ENCODE measurements at regions of chr19 and their contacts with region 1.

Region 1: DNA sequence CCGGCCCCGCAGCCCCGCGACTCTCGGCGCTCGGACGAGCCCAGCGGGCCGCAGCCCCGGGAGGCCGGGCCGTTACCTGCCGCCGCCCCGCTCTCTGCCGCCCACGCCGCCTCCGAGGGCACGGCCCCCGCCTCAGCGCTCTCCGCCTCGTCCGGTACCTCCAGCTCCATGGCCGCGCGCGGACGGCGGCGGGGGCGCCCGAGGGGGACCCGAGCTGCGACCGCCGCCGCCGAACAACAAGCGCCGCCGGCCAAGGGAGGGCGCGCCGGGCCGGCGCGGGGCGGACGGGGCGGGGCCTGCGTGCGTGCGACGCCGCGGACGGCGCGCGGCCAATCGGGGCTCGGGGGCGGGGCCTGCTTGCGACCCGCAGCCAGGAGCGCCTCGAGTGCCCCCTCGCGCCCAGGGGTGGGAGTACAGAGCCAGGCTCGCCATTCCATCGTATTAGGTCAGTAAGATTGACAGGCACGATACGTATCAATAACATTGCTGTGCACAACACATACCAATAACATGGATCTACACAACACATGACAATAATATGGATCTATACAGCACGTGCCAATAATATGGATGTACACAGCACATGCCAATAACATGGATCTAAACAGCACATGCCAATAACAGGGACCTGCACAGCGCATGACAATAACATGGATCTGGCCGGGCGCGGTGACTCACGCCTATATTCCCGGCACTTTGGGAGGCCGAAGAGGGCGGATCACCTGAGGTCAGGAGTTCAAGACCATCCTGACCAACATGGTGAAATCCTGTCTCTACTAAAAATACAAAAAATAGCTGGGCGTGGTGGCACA is at the start of gene PIP5K1C:
- DNase-seq: peak; percentile 53 to 94
- H3K4me3 ChIP-seq: peak within 1 kb of the TSS; percentile 93 to 99
- H3K27ac ChIP-seq: peak within 1 kb of the TSS; percentile 80 to 82
- H3K4me1 ChIP-seq: peaks cover 0 to 20% of the 10 kb centered on the region in 2 donors
- H3K27me3 ChIP-seq: no peaks in the 10 kb centered on the region
- CTCF ChIP-seq: peak; percentile 77 to 95 (median 77)
- total RNA-seq, gene PIP5K1C: 87.3 TPM

Region 2: GRCh38 chr19:3544742-3545668 is 155.4 kb before region 1 on chr19:
- intact Hi-C with region 1: loop called (anchors 5 kb)
- DNase-seq: peak in 1 of 2 donors; percentile 82
- H3K4me3 ChIP-seq: no peak overlapping the region
- H3K27ac ChIP-seq: no peak overlapping the region
- H3K4me1 ChIP-seq: peaks cover 3 to 8% of the 10 kb centered on the region in 2 donors
- H3K27me3 ChIP-seq: no peaks in the 10 kb centered on the region
- CTCF ChIP-seq: peak; percentile 93 to 96 (median 93)

Region 3: GRCh38 chr19:3626473-3627350 is 73.7 kb before region 1 on chr19 and contains the start of gene CACTIN:
- intact Hi-C with region 1: loop called (anchors 2 kb)
- DNase-seq: peak; percentile 94 to 99
- H3K4me3 ChIP-seq: peak within 1 kb of the TSS; percentile 74 to 94
- H3K27ac ChIP-seq: peak within 1 kb of the TSS; percentile 91 to 93
- H3K4me1 ChIP-seq: peaks cover 10 to 15% of the 10 kb centered on the region in 2 donors
- H3K27me3 ChIP-seq: no peaks in the 10 kb centered on the region
- CTCF ChIP-seq: no peak
- total RNA-seq, gene CACTIN: 57.6 TPM

Region 4: DNA sequence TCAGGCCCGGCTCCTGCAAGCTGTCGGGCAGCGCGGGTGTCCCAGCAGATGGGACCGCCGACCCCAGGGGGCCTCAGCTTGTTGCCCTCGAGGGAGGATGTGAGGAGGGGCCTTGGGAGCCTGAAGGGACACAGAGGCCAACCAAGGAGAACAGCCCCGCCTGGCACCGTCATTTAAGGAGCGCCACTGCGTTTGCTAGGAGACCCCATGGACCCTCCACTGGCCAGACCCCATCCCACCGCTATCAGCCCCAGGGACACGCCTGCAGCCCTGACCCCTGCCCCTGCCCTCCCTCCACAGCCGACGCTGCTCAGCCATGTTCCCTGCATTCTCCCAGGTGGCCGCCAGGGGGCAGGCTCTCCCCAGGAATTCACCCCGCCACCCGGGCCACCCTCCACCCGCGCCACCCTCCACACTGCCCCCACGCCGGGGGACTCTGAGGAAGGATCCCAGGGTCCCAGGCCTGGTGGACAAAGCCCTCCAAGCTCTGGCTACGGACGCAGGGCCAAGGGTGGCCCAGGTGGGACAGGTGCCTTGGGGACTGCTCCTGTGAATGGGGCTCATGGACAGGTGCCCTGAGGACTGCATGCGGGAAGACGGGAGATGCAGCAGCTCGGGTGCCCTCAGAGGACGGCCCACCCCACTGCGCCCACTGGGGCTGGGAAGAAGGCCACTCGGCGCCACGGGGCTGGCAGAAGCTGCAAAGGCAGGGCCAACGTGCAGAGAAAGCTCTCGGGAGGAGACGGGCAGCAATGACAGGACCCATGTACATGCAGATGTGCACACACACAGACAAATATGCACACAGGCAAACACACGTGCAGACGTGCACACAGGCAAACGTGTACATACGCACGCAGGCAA is 34.5 kb before region 1 on chr19:
- intact Hi-C with region 1: loop called (anchors 1 kb)
- DNase-seq: no peak
- H3K4me3 ChIP-seq: no peak overlapping the region
- H3K27ac ChIP-seq: no peak overlapping the region
- H3K4me1 ChIP-seq: peaks cover 9 to 39% of the 10 kb centered on the region in 2 donors
- H3K27me3 ChIP-seq: no peaks in the 10 kb centered on the region
- CTCF ChIP-seq: peak; percentile 88 to 96 (median 94)

Region 5: DNA sequence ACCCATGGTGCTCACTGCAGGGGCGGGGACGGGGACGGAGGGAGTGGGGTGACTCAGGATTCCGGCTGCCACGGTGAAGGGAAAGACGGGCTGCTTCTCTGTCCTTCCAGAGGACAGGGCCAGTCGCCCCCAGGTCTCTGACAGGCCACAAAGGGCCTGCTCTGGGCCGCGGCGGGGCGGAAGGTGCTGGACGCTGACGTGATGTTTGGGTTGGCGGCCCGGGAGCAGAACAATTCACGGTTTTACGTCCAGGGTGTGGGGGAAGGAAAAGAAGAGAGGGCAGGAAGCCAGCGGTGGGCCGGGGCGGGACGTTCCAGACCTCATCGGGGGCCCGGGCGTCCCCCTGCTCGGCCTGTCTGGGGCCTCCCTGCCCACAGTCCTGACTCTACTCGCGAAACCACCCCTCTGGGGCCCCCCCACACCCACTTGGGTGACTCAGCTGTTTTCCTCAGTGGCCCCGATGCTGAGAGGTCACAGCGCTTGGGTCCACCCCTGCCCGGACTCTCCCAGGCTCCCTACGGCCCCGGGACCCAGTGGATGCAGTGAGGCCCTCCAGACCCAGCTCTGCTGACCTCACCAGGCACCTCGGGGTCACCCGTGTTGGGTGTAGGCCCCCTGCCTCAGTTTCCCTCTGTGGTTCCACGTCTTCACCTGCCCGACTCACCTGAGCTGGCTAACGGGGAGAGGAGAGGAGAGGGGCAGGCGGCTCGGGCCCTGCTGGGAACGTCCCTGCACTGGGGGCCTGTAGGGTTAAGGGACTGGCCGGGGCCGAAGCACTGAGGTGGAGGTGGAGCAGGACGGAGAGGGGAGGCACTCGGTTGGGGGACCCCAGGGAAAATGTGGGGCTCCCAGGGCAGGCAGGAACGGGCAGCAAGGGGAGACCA is 29.4 kb before region 1 on chr19:
- intact Hi-C with region 1: loop called (anchors 1 kb)
- DNase-seq: peak; percentile 85 to 94
- H3K4me3 ChIP-seq: peak overlapping the region; percentile 31 to 60
- H3K27ac ChIP-seq: peak overlapping the region; percentile 99
- H3K4me1 ChIP-seq: peaks cover 18 to 48% of the 10 kb centered on the region in 2 donors
- H3K27me3 ChIP-seq: no peaks in the 10 kb centered on the region
- CTCF ChIP-seq: no peak

Measured in ascending aorta (tissue), 2 donors.